ENCODE measurements at regions of chr4 and their contacts with region 1.

Region 1: GRCh38 chr4:168710353-168710946 is 213.6 kb downstream of the PALLD start:
- DNase-seq: peak; percentile 21

Region 2: GRCh38 chr4:168585168-168586091 is 125.0 kb before region 1 on chr4:
- CTCF ChIA-PET with region 1: interaction called, 10 read pairs
- POLR2A ChIA-PET with region 1: no interaction called
- DNase-seq: peak; percentile 78

Region 3: DNA sequence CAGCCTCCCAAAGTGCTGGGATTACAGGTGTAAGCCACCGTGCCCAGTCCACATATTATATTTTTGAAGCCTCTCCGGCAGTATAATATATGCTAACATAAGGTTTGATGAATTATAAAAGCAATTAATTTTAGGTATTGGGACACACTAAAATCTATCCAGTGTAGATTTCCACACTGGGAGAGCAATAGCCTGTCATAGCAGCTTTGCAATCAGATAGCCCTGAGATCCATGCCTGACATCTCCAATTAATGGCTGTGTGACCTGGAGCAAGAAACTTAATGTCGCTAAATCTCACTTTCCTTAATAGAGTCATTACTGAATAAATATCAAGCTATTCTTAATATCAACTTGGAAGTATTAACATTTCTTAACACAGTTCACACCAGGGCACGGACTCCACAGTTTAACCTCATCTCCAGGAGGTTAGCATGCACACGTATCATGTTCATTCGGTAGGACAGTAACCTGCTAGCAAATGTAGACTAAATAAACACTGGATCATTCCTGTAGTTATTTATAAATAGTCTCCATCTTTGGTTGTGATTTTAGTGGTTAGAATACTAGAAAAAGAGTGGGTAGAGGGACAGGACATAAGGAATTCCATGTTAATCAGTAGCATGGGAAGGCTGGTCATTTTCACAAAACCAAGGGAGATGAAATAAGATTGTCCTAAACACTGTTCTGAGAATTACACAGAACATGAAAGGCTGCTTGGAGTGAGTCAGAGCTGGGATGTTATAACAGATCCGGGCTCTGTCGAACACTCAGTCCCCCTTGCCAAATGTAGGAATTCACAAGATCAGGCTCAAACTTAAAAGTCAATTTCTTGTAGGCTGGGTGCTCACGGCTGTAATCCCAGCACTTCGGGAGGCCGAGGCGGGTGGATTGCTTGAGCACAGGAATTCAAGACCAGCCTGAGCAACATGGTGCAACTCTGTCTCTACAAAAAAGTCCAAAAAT is 41.1 kb after region 1 on chr4:
- CTCF ChIA-PET with region 1: no interaction called
- POLR2A ChIA-PET with region 1: no interaction called
- DNase-seq: no peak

Region 4: DNA sequence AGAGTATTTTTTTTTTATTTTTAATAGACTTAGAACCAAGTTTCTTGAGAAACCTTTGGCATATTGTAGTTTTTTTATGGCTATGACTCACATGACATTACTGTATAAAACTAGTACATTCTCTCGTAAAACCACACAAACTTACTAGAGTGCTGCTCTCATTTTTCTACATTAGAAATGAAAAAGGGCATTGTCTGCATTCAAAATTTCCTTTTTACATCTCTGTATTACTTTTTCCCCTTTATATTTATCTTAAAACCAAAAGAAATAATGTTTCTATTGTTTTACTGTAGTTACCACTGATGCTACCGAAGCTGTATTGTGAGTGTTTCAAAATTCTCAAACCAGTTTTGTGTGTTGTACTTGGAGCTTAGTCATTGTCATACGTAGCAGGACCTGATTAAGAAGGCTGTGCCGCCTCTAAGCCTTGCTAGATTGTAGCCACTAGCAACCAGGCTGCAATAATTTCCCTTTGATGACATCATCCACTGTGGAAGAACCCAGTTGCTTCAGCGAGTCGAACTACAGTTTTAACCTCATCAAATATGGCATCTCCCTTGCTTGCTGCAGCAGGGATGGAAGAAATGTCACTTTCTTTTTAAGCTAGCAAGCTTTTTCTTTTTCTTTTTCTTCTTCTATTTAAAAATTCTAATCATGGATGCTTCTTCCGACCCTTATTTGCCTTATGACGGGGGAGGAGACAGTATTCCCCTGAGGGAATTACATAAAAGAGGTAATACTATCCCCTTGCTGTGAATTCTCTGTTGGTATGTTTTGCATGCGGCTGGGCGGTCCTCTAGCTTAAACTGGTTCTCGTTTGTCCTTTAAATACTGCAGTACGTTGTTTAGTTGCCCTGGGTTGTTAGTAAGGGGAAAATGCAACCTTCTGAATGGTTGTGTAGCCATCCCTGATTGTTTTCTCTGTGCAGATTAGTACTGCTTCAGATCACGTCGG is 949.5 kb after region 1 on chr4:
- CTCF ChIA-PET with region 1: no interaction called
- POLR2A ChIA-PET with region 1: no interaction called
- DNase-seq: peak; percentile 80

Measured in HEK293T (cell line).